ENCODE measurements at regions of chr11 and their contacts with region 1.

Region 1: GRCh38 chr11:12686246-12687101 is 12.3 kb downstream of the TEAD1 start:
- DNase-seq: no peak
- ATAC-seq: no peak
- H3K4me3 ChIP-seq: no peak overlapping the region
- H3K27ac ChIP-seq: peak overlapping the region; percentile 48
- H3K4me1 ChIP-seq: peaks cover 58% of the 10 kb centered on the region
- H3K27me3 ChIP-seq: no peaks in the 10 kb centered on the region
- CTCF ChIP-seq: no peak
- POLR2A ChIP-seq: no peak
- RAD21 ChIP-seq: no peak

Region 2: GRCh38 chr11:12581923-12582322 is 104.6 kb before region 1 on chr11:
- CTCF ChIA-PET with region 1: interaction called, 10 read pairs
- POLR2A ChIA-PET with region 1: no interaction called
- dilution Hi-C with region 1: no loop called
- in situ Hi-C with region 1: no loop called
- intact Hi-C with region 1: no loop called
- DNase-seq: peak; percentile 88
- ATAC-seq: peak; percentile 94
- H3K4me3 ChIP-seq: no peak overlapping the region
- H3K27ac ChIP-seq: no peak overlapping the region
- H3K4me1 ChIP-seq: peaks cover under 1% of the 10 kb centered on the region; the same call in 1 of the 2 replicates
- H3K27me3 ChIP-seq: no peaks in the 10 kb centered on the region
- CTCF ChIP-seq: no peak
- POLR2A ChIP-seq: no peak
- RAD21 ChIP-seq: no peak; the same call in 1 of the 2 replicates

Region 3: GRCh38 chr11:13091373-13091772 is 404.9 kb after region 1 on chr11:
- CTCF ChIA-PET with region 1: no interaction called
- POLR2A ChIA-PET with region 1: no interaction called
- dilution Hi-C with region 1: no loop called
- in situ Hi-C with region 1: no loop called
- intact Hi-C with region 1: no loop called
- DNase-seq: no peak
- ATAC-seq: no peak
- H3K4me3 ChIP-seq: no peak overlapping the region
- H3K27ac ChIP-seq: no peak overlapping the region
- H3K4me1 ChIP-seq: no peaks in the 10 kb centered on the region
- H3K27me3 ChIP-seq: peaks cover 19% of the 10 kb centered on the region
- CTCF ChIP-seq: no peak
- POLR2A ChIP-seq: no peak
- RAD21 ChIP-seq: no peak

Measured in IMR-90 (cell line).